ENCODE measurements at regions of chr17 and their contacts with region 1.

Region 1: DNA sequence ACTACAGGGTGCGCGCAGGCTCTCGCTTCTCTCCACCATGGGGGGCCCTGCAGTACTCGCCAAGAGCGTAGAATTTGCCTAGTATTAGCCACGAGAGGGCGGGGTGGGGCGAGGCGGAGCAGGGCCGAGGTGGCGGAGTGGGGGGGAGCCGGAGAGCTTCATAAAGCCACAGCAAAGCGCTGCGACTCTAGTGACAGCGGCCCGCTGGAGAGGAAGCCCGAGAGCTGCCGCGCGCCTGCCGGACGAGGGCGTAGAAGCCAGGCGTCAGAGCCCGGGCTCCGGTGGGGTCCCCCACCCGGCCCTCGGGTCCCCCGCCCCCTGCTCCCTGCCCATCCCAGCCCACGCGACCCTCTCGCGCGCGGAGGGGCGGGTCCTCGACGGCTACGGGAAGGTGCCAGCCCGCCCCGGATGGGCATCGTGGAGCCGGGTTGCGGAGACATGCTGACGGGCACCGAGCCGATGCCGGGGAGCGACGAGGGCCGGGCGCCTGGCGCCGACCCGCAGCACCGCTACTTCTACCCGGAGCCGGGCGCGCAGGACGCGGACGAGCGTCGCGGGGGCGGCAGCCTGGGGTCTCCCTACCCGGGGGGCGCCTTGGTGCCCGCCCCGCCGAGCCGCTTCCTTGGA is at the start of gene TBX21:
- DNase-seq: peak; percentile 94
- ATAC-seq: peak; percentile 90
- H3K4me3 ChIP-seq: peak within 1 kb of the TSS; percentile 51 to 73 (median 60)
- H3K4me3 Mint-ChIP-seq: peak within 1 kb of the TSS; percentile 98
- H3K27ac ChIP-seq: peak within 1 kb of the TSS; percentile 35 to 50
- H3K27ac Mint-ChIP-seq: peak within 1 kb of the TSS; percentile 95
- H3K4me1 ChIP-seq: peaks cover 31 to 44% of the 10 kb centered on the region in 2 donors
- H3K4me1 Mint-ChIP-seq: peaks cover 54% of the 10 kb centered on the region
- H3K27me3 ChIP-seq: peaks cover 0 to 7% (median 2%) of the 10 kb centered on the region in 4 experiments
- H3K27me3 Mint-ChIP-seq: no peaks in the 10 kb centered on the region
- CTCF ChIP-seq: peak; percentile 56
- total RNA-seq, gene TBX21: 8.4 and 10.8 TPM in 2 replicates

Region 2: DNA sequence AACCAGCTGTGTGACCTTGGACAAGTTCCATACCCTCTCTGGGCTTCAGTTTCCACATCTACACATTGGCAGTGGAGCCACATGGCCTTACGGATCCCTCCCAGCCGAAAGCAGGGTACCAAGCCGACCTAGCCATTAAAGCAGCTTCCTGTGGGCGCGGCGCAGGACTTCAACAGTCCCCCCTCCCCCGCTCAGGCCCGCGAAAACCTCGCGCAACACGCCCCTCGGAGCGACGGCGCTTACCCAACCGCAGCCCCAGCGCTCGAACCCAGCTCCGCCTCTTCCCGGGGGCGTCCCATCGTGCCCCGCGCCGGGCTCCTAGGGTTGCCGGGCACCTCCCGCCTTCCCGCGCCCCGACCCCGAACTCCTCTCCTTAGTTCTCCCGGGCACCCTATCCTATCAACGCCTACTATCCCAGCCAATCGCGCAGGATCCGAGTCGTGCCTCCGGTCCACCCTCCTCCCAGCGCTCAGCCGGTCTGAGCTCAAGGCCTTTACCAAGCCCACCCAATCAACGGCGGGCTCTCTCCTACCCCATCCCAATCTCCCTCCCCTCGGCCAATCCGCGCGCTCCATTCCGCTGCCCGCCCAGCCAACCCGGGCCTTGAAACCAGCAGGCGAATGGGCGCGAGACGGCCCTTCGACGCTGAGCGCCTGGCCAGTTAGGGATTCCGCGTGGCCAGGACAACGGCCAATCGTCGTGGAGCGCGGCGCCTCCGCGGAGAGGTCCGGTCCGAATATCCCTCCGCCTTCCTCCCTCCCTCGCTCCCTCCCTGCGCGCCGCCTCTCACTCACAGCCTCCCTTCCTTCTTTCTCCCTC is 83.8 kb before region 1 on chr17 and contains the start of gene KPNB1:
- CTCF ChIA-PET with region 1: no interaction called
- POLR2A ChIA-PET with region 1: no interaction called
- intact Hi-C with region 1: loop called (anchors 1 kb)
- DNase-seq: peak; percentile 99
- ATAC-seq: peak; percentile 79
- H3K4me3 ChIP-seq: peak within 1 kb of the TSS; percentile 76 to 93 (median 83)
- H3K4me3 Mint-ChIP-seq: peak within 1 kb of the TSS; percentile 98
- H3K27ac ChIP-seq: peak within 1 kb of the TSS; percentile 76 to 84
- H3K27ac Mint-ChIP-seq: peak within 1 kb of the TSS; percentile 98
- H3K4me1 ChIP-seq: peaks cover 32% of the 10 kb centered on the region in 2 donors
- H3K4me1 Mint-ChIP-seq: peaks cover 44% of the 10 kb centered on the region
- H3K27me3 ChIP-seq: no peaks in the 10 kb centered on the region
- H3K27me3 Mint-ChIP-seq: no peaks in the 10 kb centered on the region
- CTCF ChIP-seq: no peak
- total RNA-seq, gene KPNB1: 269 and 278 TPM in 2 replicates

Region 3: GRCh38 chr17:47698749-47699535 is 34.2 kb before region 1 on chr17:
- CTCF ChIA-PET with region 1: interaction called, 30 read pairs
- POLR2A ChIA-PET with region 1: interaction called, 8 read pairs
- intact Hi-C with region 1: loop called (anchors 2 kb)
- DNase-seq: peak; percentile 79
- ATAC-seq: peak; percentile 49
- H3K4me3 ChIP-seq: no peak overlapping the region
- H3K4me3 Mint-ChIP-seq: no peak overlapping the region
- H3K27ac ChIP-seq: no peak overlapping the region
- H3K27ac Mint-ChIP-seq: peak overlapping the region; percentile 15
- H3K4me1 ChIP-seq: peaks cover 25 to 61% of the 10 kb centered on the region in 2 donors
- H3K4me1 Mint-ChIP-seq: peaks cover 48% of the 10 kb centered on the region
- H3K27me3 ChIP-seq: no peaks in the 10 kb centered on the region
- H3K27me3 Mint-ChIP-seq: no peaks in the 10 kb centered on the region
- CTCF ChIP-seq: peak; percentile 99

Region 4: DNA sequence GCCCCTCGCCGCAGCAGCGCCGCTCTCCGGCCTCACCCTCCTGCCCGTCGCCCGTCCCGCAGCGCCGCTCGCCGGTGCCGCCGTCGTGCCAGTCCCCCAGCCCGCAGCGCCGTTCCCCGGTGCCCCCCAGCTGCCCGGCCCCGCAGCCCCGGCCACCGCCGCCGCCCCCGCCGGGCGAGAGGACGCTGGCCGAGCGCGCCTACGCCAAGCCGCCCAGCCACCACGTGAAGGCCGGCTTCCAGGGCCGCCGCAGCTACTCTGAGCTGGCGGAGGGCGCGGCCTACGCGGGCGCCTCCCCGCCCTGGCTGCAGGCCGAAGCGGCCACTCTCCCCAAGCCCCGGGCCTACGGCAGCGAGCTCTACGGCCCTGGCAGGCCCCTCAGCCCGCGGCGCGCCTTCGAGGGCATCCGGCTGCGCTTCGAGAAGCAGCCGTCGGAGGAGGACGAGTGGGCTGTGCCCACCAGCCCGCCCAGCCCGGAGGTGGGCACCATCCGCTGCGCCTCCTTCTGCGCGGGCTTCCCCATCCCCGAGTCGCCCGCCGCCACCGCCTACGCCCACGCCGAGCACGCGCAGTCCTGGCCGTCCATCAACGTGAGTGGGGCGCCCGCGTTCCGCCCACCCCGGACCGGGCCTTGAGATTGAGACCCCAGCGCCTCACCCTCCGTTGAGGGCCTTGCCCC is 24.2 kb before region 1 on chr17:
- CTCF ChIA-PET with region 1: interaction called, 11 read pairs
- POLR2A ChIA-PET with region 1: interaction called, 3 read pairs
- intact Hi-C with region 1: loop called (anchors 2 kb)
- DNase-seq: no peak
- ATAC-seq: no peak
- H3K4me3 ChIP-seq: no peak overlapping the region
- H3K4me3 Mint-ChIP-seq: no peak overlapping the region
- H3K27ac ChIP-seq: no peak overlapping the region
- H3K27ac Mint-ChIP-seq: no peak overlapping the region
- H3K4me1 ChIP-seq: peaks cover 58 to 66% of the 10 kb centered on the region in 2 donors
- H3K4me1 Mint-ChIP-seq: peaks cover 62% of the 10 kb centered on the region
- H3K27me3 ChIP-seq: no peaks in the 10 kb centered on the region
- H3K27me3 Mint-ChIP-seq: no peaks in the 10 kb centered on the region
- CTCF ChIP-seq: no peak

Region 5: GRCh38 chr17:47717261-47717697 is 15.9 kb before region 1 on chr17:
- CTCF ChIA-PET with region 1: interaction called, 11 read pairs
- POLR2A ChIA-PET with region 1: interaction called, 3 read pairs
- intact Hi-C with region 1: loop called (anchors 2 kb)
- DNase-seq: peak; percentile 45
- ATAC-seq: peak; percentile 18
- H3K4me3 ChIP-seq: no peak overlapping the region
- H3K4me3 Mint-ChIP-seq: peak overlapping the region; percentile 21
- H3K27ac ChIP-seq: no peak overlapping the region
- H3K27ac Mint-ChIP-seq: peak overlapping the region; percentile 16
- H3K4me1 ChIP-seq: peaks cover 85 to 98% of the 10 kb centered on the region in 2 donors
- H3K4me1 Mint-ChIP-seq: peaks cover 94% of the 10 kb centered on the region
- H3K27me3 ChIP-seq: peaks cover 0 to 14% (median 10%) of the 10 kb centered on the region in 4 experiments
- H3K27me3 Mint-ChIP-seq: peaks cover 9% of the 10 kb centered on the region
- CTCF ChIP-seq: no peak

Region 6: GRCh38 chr17:47763913-47764582 is 30.9 kb after region 1 on chr17:
- CTCF ChIA-PET with region 1: no interaction called
- POLR2A ChIA-PET with region 1: no interaction called
- intact Hi-C with region 1: no loop called
- DNase-seq: no peak
- ATAC-seq: no peak
- H3K4me3 ChIP-seq: no peak overlapping the region
- H3K4me3 Mint-ChIP-seq: no peak overlapping the region
- H3K27ac ChIP-seq: no peak overlapping the region
- H3K27ac Mint-ChIP-seq: no peak overlapping the region
- H3K4me1 ChIP-seq: no peaks in the 10 kb centered on the region
- H3K4me1 Mint-ChIP-seq: no peaks in the 10 kb centered on the region
- H3K27me3 ChIP-seq: peaks cover 0 to 5% (median 3%) of the 10 kb centered on the region in 4 experiments
- H3K27me3 Mint-ChIP-seq: peaks cover 25% of the 10 kb centered on the region
- CTCF ChIP-seq: no peak

Region 7: DNA sequence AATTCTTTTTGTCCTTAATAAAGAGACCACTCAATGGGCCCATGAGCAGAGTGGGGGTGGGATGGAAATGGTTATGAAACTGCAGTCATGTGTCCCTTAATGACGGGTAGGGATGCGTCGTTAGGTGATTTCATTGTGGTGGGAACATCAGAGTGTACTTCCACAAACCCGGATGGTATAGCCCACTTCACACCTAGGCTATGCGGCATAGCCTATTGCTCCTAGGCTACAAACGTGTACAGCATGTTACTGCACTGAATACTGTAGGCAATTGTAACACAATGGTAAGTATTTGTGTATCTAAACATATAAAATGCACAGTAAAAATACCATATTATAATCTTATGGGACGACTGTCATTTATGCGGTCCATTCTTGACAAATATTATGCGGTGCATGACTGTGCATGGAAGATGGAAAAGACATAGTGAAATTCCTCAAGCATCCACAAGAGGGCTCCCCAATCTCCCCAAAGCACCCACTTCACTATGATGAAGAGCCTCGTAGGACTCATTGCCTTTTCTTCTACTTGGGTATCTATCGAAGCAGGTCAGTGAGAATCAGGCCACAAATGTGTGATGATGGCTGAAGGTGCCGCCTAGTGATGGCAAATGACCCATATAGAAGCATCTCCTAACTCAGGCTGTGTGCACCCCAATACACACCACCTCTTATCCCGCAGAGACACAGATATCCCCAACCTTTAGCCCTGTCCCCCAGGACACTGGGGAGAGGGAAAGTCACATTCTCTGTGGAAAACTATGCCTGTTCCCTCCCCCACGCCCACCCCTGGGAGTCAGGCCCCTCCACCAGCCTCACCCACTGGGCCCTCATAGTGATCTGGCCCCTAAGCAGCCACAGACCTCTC is 43.4 kb after region 1 on chr17:
- CTCF ChIA-PET with region 1: interaction called, 3 read pairs
- POLR2A ChIA-PET with region 1: no interaction called
- intact Hi-C with region 1: loop called (anchors 1 kb)
- DNase-seq: peak; percentile 66
- ATAC-seq: peak; percentile 65
- H3K4me3 ChIP-seq: no peak overlapping the region
- H3K4me3 Mint-ChIP-seq: no peak overlapping the region
- H3K27ac ChIP-seq: no peak overlapping the region
- H3K27ac Mint-ChIP-seq: no peak overlapping the region
- H3K4me1 ChIP-seq: no peaks in the 10 kb centered on the region
- H3K4me1 Mint-ChIP-seq: no peaks in the 10 kb centered on the region
- H3K27me3 ChIP-seq: peaks cover 0 to 48% (median 25%) of the 10 kb centered on the region in 4 experiments
- H3K27me3 Mint-ChIP-seq: peaks cover 57% of the 10 kb centered on the region
- CTCF ChIP-seq: peak; percentile 84